ENCODE measurements at regions of chr9 and their contacts with region 1.

Region 1: GRCh38 chr9:34759432-34760134 is 49.6 kb upstream of the CCL21 start:
- DNase-seq: no peak
- ATAC-seq: no peak
- H3K4me3 Mint-ChIP-seq: no peak overlapping the region
- H3K27ac Mint-ChIP-seq: no peak overlapping the region
- H3K4me1 Mint-ChIP-seq: no peaks in the 10 kb centered on the region
- H3K27me3 Mint-ChIP-seq: peaks cover 22% of the 10 kb centered on the region
- CTCF ChIP-seq: no peak

Region 2: GRCh38 chr9:34620061-34620994 is 139.3 kb before region 1 on chr9 and contains the start of gene DCTN3:
- CTCF ChIA-PET with region 1: no interaction called
- POLR2A ChIA-PET with region 1: no interaction called
- DNase-seq: peak; percentile 88
- ATAC-seq: peak; percentile 92
- H3K4me3 Mint-ChIP-seq: peak within 1 kb of the TSS; percentile 86
- H3K27ac Mint-ChIP-seq: no peak within 1 kb of the TSS
- H3K4me1 Mint-ChIP-seq: peaks cover 10% of the 10 kb centered on the region
- H3K27me3 Mint-ChIP-seq: peaks cover 55% of the 10 kb centered on the region
- CTCF ChIP-seq: no peak
- total RNA-seq, gene DCTN3: 23.8 to 28.7 TPM (median 27.5 TPM) in 3 replicates

Region 3: GRCh38 chr9:34658461-34658860 is 101.1 kb before region 1 on chr9:
- CTCF ChIA-PET with region 1: no interaction called
- POLR2A ChIA-PET with region 1: no interaction called
- DNase-seq: no peak
- ATAC-seq: no peak
- H3K4me3 Mint-ChIP-seq: no peak overlapping the region
- H3K27ac Mint-ChIP-seq: no peak overlapping the region
- H3K4me1 Mint-ChIP-seq: peaks cover 9% of the 10 kb centered on the region
- H3K27me3 Mint-ChIP-seq: peaks cover 6% of the 10 kb centered on the region
- CTCF ChIP-seq: no peak

Region 4: DNA sequence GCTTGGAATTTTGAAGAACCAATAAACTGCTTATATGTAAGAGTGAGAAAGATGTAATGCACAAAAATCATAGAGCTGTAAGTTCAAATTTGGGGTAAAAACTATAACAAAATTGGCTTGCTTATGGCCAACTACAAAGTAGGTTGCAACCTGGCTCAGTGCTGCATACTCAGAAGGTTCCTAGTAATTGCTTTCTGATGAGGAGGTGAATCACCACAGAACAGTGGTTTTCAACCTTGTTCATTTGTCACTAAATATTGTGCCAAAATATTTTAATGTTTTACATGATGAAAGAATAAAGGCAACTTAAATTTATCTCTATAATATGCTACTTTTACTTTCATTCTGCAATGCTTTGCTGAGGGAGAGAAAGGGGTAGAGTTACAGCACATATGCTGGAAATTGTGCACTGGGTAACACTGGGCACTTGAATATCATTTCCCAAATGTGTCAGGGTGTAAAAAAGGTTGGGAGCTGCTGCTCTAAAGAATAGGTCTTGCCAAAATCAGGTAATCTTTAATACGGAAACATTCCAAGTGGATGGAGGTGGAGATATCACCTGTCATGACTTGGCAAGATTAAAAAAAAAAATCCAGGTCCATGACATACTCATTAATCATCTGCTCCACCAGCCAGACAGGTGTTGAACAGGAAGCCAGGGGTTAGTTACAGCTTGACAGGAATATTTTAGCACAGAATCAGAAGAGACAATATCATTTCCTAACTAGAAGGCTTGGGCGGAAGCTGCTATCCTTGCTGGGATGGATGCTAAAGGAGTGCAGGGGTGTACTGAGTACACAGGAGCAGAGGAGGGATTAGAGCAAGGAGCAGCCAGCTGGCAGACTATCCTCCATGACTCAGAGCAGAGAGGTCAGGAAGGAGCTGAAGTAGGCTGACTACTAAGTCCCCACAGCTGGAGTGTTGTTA is 15.0 kb before region 1 on chr9:
- CTCF ChIA-PET with region 1: interaction called, 13 read pairs
- POLR2A ChIA-PET with region 1: no interaction called
- DNase-seq: no peak
- ATAC-seq: no peak
- H3K4me3 Mint-ChIP-seq: no peak overlapping the region
- H3K27ac Mint-ChIP-seq: no peak overlapping the region
- H3K4me1 Mint-ChIP-seq: no peaks in the 10 kb centered on the region
- H3K27me3 Mint-ChIP-seq: peaks cover 5% of the 10 kb centered on the region
- CTCF ChIP-seq: no peak

Region 5: GRCh38 chr9:34869390-34869789 is 109.8 kb after region 1 on chr9:
- CTCF ChIA-PET with region 1: interaction called, 16 read pairs
- POLR2A ChIA-PET with region 1: no interaction called
- DNase-seq: no peak
- ATAC-seq: no peak
- H3K4me3 Mint-ChIP-seq: no peak overlapping the region
- H3K27ac Mint-ChIP-seq: no peak overlapping the region
- H3K4me1 Mint-ChIP-seq: no peaks in the 10 kb centered on the region
- H3K27me3 Mint-ChIP-seq: peaks cover 31% of the 10 kb centered on the region
- CTCF ChIP-seq: no peak

Region 6: DNA sequence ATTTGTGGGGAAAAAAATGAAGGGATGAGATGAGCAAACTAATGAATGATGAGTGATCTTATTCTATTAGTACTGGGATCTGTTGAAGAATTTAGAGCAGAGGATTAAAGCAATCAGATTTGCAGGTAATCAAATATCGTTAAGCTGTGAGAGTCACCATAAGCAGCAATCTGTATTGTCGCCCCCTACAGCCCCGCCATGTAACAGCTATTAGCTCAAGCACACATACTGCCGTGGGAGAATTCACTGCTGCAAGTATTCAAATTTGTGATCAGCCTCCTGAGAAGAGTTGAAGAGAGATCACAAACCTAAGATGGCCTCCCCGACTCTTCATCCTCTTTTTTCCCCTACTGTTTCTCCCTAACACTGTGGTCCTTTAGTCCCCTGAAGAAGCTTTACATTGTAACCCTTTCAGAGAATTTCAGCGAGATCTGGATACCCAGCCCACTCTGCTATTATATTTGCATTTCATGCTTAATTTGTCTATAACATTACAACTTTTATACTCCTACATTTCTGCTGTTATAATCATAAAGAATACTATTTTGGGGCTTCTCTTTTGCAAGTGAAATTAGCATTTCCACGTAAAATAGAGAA is 170.0 kb after region 1 on chr9:
- CTCF ChIA-PET with region 1: interaction called, 11 read pairs
- POLR2A ChIA-PET with region 1: no interaction called
- DNase-seq: peak; percentile 68
- ATAC-seq: peak; percentile 97
- H3K4me3 Mint-ChIP-seq: no peak overlapping the region
- H3K27ac Mint-ChIP-seq: no peak overlapping the region
- H3K4me1 Mint-ChIP-seq: no peaks in the 10 kb centered on the region; the same call in 1 of the 2 replicates
- H3K27me3 Mint-ChIP-seq: peaks cover 5% of the 10 kb centered on the region
- CTCF ChIP-seq: peak; percentile 63

Region 7: GRCh38 chr9:34994260-34994899 is 234.8 kb after region 1 on chr9:
- CTCF ChIA-PET with region 1: interaction called, 13 read pairs
- POLR2A ChIA-PET with region 1: no interaction called
- DNase-seq: peak; percentile 54
- ATAC-seq: peak; percentile 11
- H3K4me3 Mint-ChIP-seq: peak overlapping the region; percentile 6; the same call in 1 of the 2 replicates
- H3K27ac Mint-ChIP-seq: peak overlapping the region; percentile 76
- H3K4me1 Mint-ChIP-seq: peaks cover 52% of the 10 kb centered on the region
- H3K27me3 Mint-ChIP-seq: no peaks in the 10 kb centered on the region; the same call in 1 of the 2 replicates
- CTCF ChIP-seq: peak; percentile 49